CD4-positive, alpha-beta T cell (primary cell): ENCODE measurements at regions of chr20 and their contacts with region 1.

Region 1: GRCh38 chr20:47272893-47273590 is 83.5 kb downstream of the ZMYND8 start:
- DNase-seq: peak in 12 of 14 experiments; percentile 7 to 81 (median 31)
- ATAC-seq: peak; percentile 84
- H3K4me3 ChIP-seq: no peak overlapping the region
- H3K4me3 Mint-ChIP-seq: no peak overlapping the region
- H3K27ac ChIP-seq: no peak overlapping the region
- H3K27ac Mint-ChIP-seq: peak overlapping the region; percentile 52
- H3K4me1 ChIP-seq: no peaks in the 10 kb centered on the region
- H3K4me1 Mint-ChIP-seq: peaks cover 28% of the 10 kb centered on the region
- H3K27me3 ChIP-seq: no peaks in the 10 kb centered on the region
- H3K27me3 Mint-ChIP-seq: no peaks in the 10 kb centered on the region
- CTCF ChIP-seq: peak; percentile 98

Region 2: GRCh38 chr20:47196091-47197081 is 76.7 kb before region 1 on chr20:
- CTCF ChIA-PET with region 1: no interaction called
- POLR2A ChIA-PET with region 1: no interaction called
- intact Hi-C with region 1: loop called in 1 of 2 experiments (anchors 5 kb)
- DNase-seq: peak; percentile 44 to 81 (median 66)
- ATAC-seq: peak; percentile 74
- H3K4me3 ChIP-seq: no peak overlapping the region
- H3K4me3 Mint-ChIP-seq: no peak overlapping the region
- H3K27ac ChIP-seq: no peak overlapping the region
- H3K27ac Mint-ChIP-seq: no peak overlapping the region
- H3K4me1 ChIP-seq: peaks cover 5% of the 10 kb centered on the region
- H3K4me1 Mint-ChIP-seq: no peaks in the 10 kb centered on the region
- H3K27me3 ChIP-seq: no peaks in the 10 kb centered on the region
- H3K27me3 Mint-ChIP-seq: peaks cover 3% of the 10 kb centered on the region
- CTCF ChIP-seq: peak; percentile 98